H1 (cell line): ENCODE measurements at regions of chr19 and their contacts with region 1.

Region 1: GRCh38 chr19:5775668-5776309 is 8.8 kb downstream of the PRR22 start:
- DNase-seq: no peak
- H3K4me3 ChIP-seq: no peak overlapping the region
- H3K27ac ChIP-seq: no peak overlapping the region
- H3K4me1 ChIP-seq: no peaks in the 10 kb centered on the region
- H3K27me3 ChIP-seq: no peaks in the 10 kb centered on the region; a peak in 2 of 7 replicates
- CTCF ChIP-seq: no peak
- EP300 ChIP-seq: no peak
- POLR2A ChIP-seq: no peak
- RAD21 ChIP-seq: no peak

Region 2: DNA sequence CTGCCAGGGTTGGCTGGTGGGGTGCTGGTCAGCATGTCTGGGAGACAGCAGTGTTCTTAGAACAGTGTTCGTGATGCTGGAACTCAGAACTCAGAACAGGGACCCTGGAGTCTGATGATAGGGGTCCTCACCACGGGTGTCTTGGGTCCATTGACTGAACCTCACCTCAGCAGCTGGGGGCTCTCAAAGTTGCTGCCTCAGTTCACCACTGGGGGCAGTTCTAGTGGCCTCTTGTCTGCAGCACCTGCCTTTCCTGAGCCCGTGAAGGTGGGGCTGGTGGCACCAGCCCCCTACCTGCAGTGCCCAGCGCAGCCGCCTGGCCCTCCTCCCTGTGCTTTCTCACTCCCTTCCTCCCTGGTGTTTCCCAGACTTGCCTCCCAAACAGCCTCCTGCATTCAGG is 124.4 kb before region 1 on chr19:
- CTCF ChIA-PET with region 1: no interaction called
- POLR2A ChIA-PET with region 1: no interaction called
- DNase-seq: no peak
- H3K4me3 ChIP-seq: no peak overlapping the region
- H3K27ac ChIP-seq: no peak overlapping the region
- H3K4me1 ChIP-seq: no peaks in the 10 kb centered on the region
- H3K27me3 ChIP-seq: no peaks in the 10 kb centered on the region
- CTCF ChIP-seq: peak in 2 of 3 experiments; percentile 8 to 23; a peak in 1 of 4 replicates
- EP300 ChIP-seq: no peak
- POLR2A ChIP-seq: no peak
- RAD21 ChIP-seq: no peak

Region 3: DNA sequence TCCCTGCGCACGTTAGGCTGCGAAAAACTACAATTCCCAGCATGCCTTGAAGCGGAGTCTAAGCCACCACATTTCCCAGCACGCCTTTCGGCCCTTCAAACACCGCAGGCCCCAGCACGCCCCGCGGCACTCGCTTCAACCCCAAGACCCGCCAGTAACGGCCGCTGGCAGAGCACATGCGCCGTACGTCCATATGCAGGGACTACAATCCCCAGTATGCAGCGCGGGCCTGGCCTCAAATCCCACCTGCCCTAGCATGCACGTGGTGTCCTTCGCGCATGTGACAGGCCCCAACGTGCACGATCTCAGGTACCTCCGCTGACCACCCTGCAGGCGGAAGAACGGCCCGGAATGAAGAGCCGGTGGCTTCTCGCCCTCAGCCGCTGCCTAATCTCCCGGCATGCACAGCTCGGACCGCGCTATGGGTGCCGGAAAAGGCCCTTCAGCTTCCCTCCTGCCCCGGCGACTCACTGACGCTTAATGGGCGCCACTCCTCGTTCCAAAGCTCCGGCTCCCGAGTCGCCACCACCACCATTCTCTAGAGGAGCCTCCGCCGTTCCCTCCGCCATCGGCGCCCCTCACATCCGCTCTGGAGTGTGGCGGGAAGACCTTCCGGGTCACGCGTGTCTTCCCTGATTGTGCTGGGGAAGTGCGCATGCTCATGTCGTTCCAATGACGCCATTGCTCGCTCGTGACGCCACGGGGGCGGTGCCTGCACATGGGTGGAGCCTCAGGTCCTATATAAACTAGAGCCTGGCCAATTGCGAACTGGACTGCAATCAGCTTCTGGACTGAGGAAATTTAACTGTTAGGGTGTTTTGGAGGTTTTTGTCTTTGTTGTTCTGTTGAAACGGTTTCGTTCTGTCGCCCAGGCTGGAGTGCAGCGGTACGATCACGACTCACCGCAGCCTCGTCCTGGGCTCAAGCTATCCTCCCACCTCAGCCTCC is 15.1 kb after region 1 on chr19 and contains the start of gene DUS3L:
- CTCF ChIA-PET with region 1: interaction called, 9 read pairs
- POLR2A ChIA-PET with region 1: interaction called, 32 read pairs
- DNase-seq: peak; percentile 94 to 95
- H3K4me3 ChIP-seq: peak within 1 kb of the TSS; percentile 77 to 92 (median 82)
- H3K27ac ChIP-seq: peak within 1 kb of the TSS; percentile 91
- H3K4me1 ChIP-seq: no peaks in the 10 kb centered on the region; a peak in 1 of 7 replicates
- H3K27me3 ChIP-seq: no peaks in the 10 kb centered on the region
- CTCF ChIP-seq: no peak
- EP300 ChIP-seq: no peak
- POLR2A ChIP-seq: peak in 1 of 2 experiments; percentile 87; a peak in 2 of 3 replicates
- RAD21 ChIP-seq: no peak
- total RNA-seq, gene DUS3L: 39.1 and 39.4 TPM in 2 replicates

Region 4: GRCh38 chr19:5850743-5851293 is 75.0 kb after region 1 on chr19:
- CTCF ChIA-PET with region 1: no interaction called
- POLR2A ChIA-PET with region 1: no interaction called
- DNase-seq: no peak
- H3K4me3 ChIP-seq: no peak overlapping the region
- H3K27ac ChIP-seq: no peak overlapping the region
- H3K4me1 ChIP-seq: no peaks in the 10 kb centered on the region
- H3K27me3 ChIP-seq: no peaks in the 10 kb centered on the region
- CTCF ChIP-seq: no peak
- EP300 ChIP-seq: no peak
- POLR2A ChIP-seq: no peak
- RAD21 ChIP-seq: no peak